Common myeloid progenitor, CD34-positive (primary cell): ENCODE measurements at regions of chr14 and their contacts with region 1.

Region 1: DNA sequence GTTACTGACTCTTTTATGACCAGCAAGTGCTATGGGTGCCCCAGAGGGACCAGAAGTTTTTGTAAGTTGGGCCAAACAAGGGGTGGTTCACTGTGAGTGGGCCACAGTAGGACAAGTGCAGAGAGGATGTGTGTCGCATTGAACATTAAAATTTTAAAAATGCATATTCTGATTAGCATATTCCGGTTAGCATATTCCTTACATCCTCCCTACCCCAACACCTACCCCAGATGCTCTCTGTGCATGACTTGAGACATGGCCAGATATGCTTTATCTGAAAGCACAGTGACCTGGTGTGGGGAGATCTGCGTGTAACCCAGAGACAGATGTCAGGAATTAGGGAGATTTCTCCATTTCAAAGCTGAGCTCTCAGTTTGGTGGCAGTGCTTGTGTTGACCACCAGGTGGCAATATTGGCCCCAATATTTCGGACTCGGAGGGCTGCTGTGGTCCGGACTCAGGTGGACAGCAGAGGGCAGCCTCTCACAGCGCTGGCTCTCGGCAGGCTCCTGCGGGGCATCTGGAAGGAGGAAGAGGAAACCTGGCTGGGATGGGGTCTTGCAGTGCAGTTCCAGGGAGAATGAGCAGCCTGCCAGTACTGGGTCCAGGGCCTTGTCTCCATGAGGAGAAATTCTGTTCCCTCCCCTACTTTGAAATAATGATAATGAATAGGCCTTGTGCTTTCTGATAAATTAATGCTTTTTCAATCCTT is 1.6 kb upstream of the CEBPE start:
- DNase-seq: peak; percentile 84 to 89 (median 86)
- H3K4me3 ChIP-seq: no peak overlapping the region
- H3K27ac ChIP-seq: peak overlapping the region in 1 of 2 experiments; percentile 68
- H3K4me1 ChIP-seq: peaks cover 2 to 35% (median 29%) of the 10 kb centered on the region in 4 experiments
- H3K27me3 ChIP-seq: no peaks in the 10 kb centered on the region

Region 2: DNA sequence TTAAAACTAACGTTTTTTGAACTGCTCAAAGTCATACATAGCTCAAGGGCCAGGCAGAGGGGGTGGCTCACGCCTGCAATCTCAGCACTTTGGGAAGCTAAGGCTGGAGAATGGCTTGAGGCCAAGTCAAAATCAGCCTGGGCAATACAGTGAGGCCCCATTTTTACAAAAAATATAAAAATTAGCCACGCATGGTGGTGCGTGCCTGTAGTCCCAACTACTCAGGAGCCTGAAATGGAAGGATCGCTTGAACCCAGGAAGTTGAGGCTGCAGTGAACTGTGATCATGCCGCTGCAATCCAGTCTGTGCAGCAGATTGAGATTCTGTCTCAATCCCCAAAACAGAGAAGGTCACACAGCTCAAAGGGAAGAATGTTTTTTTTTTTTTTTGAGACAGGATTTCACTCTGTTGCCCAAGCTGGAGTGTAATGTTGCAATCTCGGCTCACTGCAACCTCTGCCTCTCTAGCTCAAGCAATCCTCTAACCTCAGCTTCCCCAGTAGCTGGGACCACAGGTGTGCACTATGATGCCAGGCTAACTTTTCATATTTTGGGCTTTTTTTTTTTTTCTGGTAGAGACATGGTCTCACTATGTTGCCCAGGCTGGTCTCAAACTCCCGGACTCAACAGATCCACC is 204.7 kb before region 1 on chr14:
- CTCF ChIA-PET with region 1: no interaction called
- POLR2A ChIA-PET with region 1: no interaction called
- DNase-seq: peak in 1 of 3 donors; percentile 26
- H3K4me3 ChIP-seq: no peak overlapping the region
- H3K27ac ChIP-seq: peak overlapping the region in 1 of 2 experiments; percentile 25
- H3K4me1 ChIP-seq: peaks cover 7 to 29% (median 19%) of the 10 kb centered on the region in 4 experiments
- H3K27me3 ChIP-seq: no peaks in the 10 kb centered on the region

Region 3: GRCh38 chr14:23076785-23077408 is 43.8 kb before region 1 on chr14:
- CTCF ChIA-PET with region 1: interaction called, 11 read pairs
- POLR2A ChIA-PET with region 1: no interaction called
- DNase-seq: peak; percentile 35 to 65 (median 51)
- H3K4me3 ChIP-seq: no peak overlapping the region
- H3K27ac ChIP-seq: no peak overlapping the region
- H3K4me1 ChIP-seq: peaks cover 0 to 6% (median 5%) of the 10 kb centered on the region in 4 experiments
- H3K27me3 ChIP-seq: no peaks in the 10 kb centered on the region

Region 4: GRCh38 chr14:23095196-23096108 is 25.2 kb before region 1 on chr14 and contains the start of gene C14orf119:
- CTCF ChIA-PET with region 1: interaction called, 12 read pairs
- POLR2A ChIA-PET with region 1: interaction called, 3 read pairs
- DNase-seq: peak; percentile 100
- H3K4me3 ChIP-seq: peak within 1 kb of the TSS; percentile 85 to 100 (median 96)
- H3K27ac ChIP-seq: peak within 1 kb of the TSS; percentile 98 to 99
- H3K4me1 ChIP-seq: peaks cover 15 to 33% (median 20%) of the 10 kb centered on the region in 4 experiments
- H3K27me3 ChIP-seq: no peaks in the 10 kb centered on the region

Region 5: DNA sequence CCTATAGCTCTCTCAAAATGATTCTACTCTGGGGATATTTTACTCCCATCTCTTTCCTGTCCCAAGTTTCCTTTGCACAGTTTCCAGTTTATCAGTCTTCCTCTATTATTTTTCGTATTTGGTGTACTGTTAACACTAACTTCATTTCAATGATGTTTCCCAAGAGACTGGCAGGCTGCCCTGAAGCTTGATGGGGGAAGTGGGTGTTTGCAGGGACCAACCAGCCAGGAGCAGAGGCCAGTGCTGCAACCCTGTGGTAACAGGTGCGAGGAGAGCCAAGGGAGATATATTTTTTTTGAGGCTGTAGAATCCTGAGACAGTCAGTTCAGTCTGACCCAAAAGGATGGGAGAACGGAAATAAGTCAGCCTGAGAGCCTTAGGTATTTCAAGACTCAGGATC is 10.2 kb after region 1 on chr14:
- CTCF ChIA-PET with region 1: interaction called, 31 read pairs
- POLR2A ChIA-PET with region 1: no interaction called
- DNase-seq: peak in 2 of 3 donors; percentile 15 to 26
- H3K4me3 ChIP-seq: no peak overlapping the region
- H3K27ac ChIP-seq: no peak overlapping the region
- H3K4me1 ChIP-seq: peaks cover 0 to 5% (median 2%) of the 10 kb centered on the region in 4 experiments
- H3K27me3 ChIP-seq: no peaks in the 10 kb centered on the region

Region 6: DNA sequence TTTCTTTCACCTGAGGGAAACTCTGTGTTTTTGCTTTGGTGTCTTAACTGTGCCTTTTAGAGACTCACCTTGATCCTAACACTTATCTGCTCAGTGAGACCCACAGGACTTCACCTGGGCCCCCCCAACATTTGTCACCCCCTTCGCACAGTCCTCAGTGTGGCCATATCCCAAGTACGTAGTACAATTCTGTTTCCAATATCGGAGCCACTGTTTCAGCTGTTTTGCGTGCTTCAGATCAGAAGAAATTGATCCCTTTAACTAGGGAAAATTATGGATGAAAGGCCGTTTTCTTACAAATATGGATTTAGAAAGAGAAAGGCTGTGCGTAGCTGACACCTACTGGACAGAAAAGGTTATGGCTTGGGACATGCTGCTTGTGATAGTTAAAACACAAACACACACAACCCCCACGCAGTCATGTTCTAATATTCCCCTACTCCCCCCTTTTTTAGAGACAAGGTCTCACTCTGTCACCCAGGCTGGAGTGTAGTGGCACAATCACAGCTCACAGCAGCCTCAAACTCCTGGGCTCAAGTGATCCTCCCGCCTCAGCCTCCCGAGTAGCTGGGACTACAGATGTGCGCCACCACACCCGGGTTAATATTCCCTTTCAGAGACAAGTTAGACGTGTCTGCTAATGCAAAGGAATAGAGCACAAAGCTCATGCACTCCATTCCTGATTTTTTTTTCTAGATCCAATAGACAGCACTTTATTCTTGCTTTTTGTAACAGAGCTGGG is 66.4 kb after region 1 on chr14:
- CTCF ChIA-PET with region 1: interaction called, 462 read pairs
- POLR2A ChIA-PET with region 1: interaction called, 4 read pairs
- DNase-seq: peak; percentile 66 to 77 (median 71)
- H3K4me3 ChIP-seq: no peak overlapping the region
- H3K27ac ChIP-seq: no peak overlapping the region
- H3K4me1 ChIP-seq: peaks cover 0 to 14% (median 7%) of the 10 kb centered on the region in 4 experiments
- H3K27me3 ChIP-seq: peaks cover 0 to 6% (median 0%) of the 10 kb centered on the region in 5 experiments